PC-9 (cell line): ENCODE measurements at regions of chr21 and their contacts with region 1.

Region 1: GRCh38 chr21:41678944-41679343 is 87.9 kb downstream of the RIPK4 start:
- DNase-seq: peak; percentile 96 to 100
- H3K4me3 ChIP-seq: peak overlapping the region; percentile 73
- H3K27ac ChIP-seq: peak overlapping the region; percentile 99
- H3K4me1 ChIP-seq: peaks cover 56% of the 10 kb centered on the region
- H3K27me3 ChIP-seq: no peaks in the 10 kb centered on the region
- CTCF ChIP-seq: no peak

Region 2: GRCh38 chr21:40829308-40830175 is 849.4 kb before region 1 on chr21:
- CTCF ChIA-PET with region 1: no interaction called
- POLR2A ChIA-PET with region 1: no interaction called
- intact Hi-C with region 1: no loop called
- DNase-seq: no peak
- H3K4me3 ChIP-seq: no peak overlapping the region
- H3K27ac ChIP-seq: no peak overlapping the region
- H3K4me1 ChIP-seq: no peaks in the 10 kb centered on the region
- H3K27me3 ChIP-seq: peaks cover 7% of the 10 kb centered on the region; the same call in 1 of the 2 replicates
- CTCF ChIP-seq: no peak

Region 3: GRCh38 chr21:41387042-41387750 is 291.7 kb before region 1 on chr21:
- CTCF ChIA-PET with region 1: no interaction called
- POLR2A ChIA-PET with region 1: no interaction called
- intact Hi-C with region 1: no loop called
- DNase-seq: no peak
- H3K4me3 ChIP-seq: no peak overlapping the region
- H3K27ac ChIP-seq: no peak overlapping the region
- H3K4me1 ChIP-seq: no peaks in the 10 kb centered on the region
- H3K27me3 ChIP-seq: no peaks in the 10 kb centered on the region
- CTCF ChIP-seq: no peak

Region 4: DNA sequence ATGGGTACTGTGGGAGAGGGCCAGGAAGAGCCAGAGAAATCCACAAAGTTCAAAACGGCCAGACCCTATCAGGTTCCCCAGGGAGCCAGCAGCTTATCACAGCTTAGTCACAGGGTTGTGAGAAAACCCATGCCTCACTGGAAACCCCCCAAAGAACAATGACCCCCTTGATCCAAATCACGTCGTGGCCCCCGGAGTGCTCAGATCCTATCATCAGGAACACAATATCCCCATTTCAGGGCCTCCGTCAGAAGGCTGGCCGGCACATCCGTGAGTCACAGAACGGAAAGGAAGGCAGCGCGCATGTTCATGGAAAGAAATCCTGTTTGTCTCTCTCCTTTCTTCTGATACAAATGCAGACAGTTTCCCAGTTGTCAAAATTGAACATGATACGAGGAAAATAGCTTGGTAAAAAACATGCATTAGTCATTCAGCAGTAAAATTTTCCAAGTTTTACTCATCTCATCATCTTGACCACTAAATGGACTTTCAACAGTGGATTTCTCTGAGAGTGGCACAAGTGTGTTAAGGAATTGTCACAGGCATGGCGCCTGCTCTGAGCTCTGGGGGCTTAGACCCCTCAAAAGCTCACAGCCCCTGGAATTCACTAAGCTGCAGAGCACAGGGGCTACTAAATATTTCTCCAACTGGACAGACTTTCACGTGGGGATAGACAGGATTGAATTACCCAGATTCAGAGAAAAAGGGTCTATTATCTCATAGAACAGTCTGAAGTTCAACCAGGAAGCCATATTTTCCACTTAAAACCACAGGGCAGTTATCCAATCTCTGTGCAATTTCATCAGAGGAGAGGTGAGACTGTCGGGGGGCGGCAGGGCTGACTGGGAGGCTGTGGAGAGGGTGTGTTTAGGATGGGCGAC is 36.9 kb before region 1 on chr21:
- CTCF ChIA-PET with region 1: no interaction called
- POLR2A ChIA-PET with region 1: interaction called, 12 read pairs
- intact Hi-C with region 1: no loop called
- DNase-seq: peak; percentile 58 to 93
- H3K4me3 ChIP-seq: peak overlapping the region; percentile 44; the same call in 1 of the 2 replicates
- H3K27ac ChIP-seq: peak overlapping the region; percentile 100
- H3K4me1 ChIP-seq: peaks cover 75% of the 10 kb centered on the region
- H3K27me3 ChIP-seq: no peaks in the 10 kb centered on the region
- CTCF ChIP-seq: no peak

Region 5: GRCh38 chr21:41706678-41707077 is 27.7 kb after region 1 on chr21:
- CTCF ChIA-PET with region 1: interaction called, 4 read pairs
- POLR2A ChIA-PET with region 1: no interaction called
- intact Hi-C with region 1: loop called (anchors 1 kb)
- DNase-seq: peak in 1 of 2 experiments; percentile 80
- H3K4me3 ChIP-seq: no peak overlapping the region
- H3K27ac ChIP-seq: peak overlapping the region; percentile 93
- H3K4me1 ChIP-seq: peaks cover 79% of the 10 kb centered on the region
- H3K27me3 ChIP-seq: no peaks in the 10 kb centered on the region
- CTCF ChIP-seq: no peak

Region 6: DNA sequence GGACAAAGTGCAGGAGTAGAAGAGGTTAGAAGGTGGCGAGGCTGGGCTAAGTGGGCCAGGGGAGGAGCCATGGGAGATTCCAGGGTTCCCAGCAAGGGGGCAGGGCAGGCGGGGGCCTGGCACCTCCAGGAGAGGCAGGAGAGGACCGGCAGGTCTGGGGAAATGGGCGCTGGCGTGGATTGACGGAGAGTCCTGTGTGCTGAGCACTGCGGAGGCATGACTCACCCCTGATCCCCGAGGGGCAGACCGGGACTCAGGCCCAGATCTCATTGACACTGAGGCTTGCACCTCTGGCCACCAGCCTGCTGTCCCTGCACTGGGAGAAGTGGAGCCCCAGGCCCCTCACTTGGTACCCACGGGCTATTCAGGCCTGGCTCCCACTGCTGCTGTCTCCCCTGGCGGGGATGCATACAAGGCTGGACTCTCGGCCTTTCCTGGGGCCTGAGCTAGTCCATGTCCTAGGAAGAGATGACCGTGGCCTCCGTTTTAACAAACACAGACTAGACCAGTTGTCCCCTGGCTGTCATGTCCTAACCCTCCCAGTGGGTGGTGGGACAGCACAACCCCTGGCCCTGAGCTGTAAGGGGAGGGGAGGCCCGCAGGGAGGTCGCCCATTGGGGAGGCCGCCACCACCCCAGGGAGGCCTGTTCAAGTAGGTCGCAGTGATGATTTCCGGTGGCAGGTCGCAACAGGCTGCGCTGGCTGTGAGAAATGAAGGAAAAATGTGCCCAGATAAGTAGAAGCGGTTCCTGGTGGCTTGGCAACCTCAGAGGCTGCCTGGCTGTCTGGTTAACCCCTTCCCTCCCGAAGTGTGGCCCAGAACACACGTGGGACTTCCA is 48.2 kb after region 1 on chr21:
- CTCF ChIA-PET with region 1: no interaction called
- POLR2A ChIA-PET with region 1: no interaction called
- intact Hi-C with region 1: loop called (anchors 1 kb)
- DNase-seq: peak; percentile 89 to 93
- H3K4me3 ChIP-seq: peak overlapping the region; percentile 27; the same call in 1 of the 2 replicates
- H3K27ac ChIP-seq: peak overlapping the region; percentile 93
- H3K4me1 ChIP-seq: peaks cover 56% of the 10 kb centered on the region
- H3K27me3 ChIP-seq: no peaks in the 10 kb centered on the region
- CTCF ChIP-seq: peak; percentile 37; the same call in 1 of the 2 replicates

Region 7: GRCh38 chr21:41768437-41769061 is 89.6 kb after region 1 on chr21:
- CTCF ChIA-PET with region 1: no interaction called
- POLR2A ChIA-PET with region 1: interaction called, 4 read pairs
- intact Hi-C with region 1: loop called (anchors 1 kb)
- DNase-seq: peak; percentile 28 to 80
- H3K4me3 ChIP-seq: peak overlapping the region; percentile 100
- H3K27ac ChIP-seq: peak overlapping the region; percentile 99
- H3K4me1 ChIP-seq: peaks cover 12% of the 10 kb centered on the region
- H3K27me3 ChIP-seq: no peaks in the 10 kb centered on the region
- CTCF ChIP-seq: no peak; the same call in 1 of the 2 replicates

Region 8: DNA sequence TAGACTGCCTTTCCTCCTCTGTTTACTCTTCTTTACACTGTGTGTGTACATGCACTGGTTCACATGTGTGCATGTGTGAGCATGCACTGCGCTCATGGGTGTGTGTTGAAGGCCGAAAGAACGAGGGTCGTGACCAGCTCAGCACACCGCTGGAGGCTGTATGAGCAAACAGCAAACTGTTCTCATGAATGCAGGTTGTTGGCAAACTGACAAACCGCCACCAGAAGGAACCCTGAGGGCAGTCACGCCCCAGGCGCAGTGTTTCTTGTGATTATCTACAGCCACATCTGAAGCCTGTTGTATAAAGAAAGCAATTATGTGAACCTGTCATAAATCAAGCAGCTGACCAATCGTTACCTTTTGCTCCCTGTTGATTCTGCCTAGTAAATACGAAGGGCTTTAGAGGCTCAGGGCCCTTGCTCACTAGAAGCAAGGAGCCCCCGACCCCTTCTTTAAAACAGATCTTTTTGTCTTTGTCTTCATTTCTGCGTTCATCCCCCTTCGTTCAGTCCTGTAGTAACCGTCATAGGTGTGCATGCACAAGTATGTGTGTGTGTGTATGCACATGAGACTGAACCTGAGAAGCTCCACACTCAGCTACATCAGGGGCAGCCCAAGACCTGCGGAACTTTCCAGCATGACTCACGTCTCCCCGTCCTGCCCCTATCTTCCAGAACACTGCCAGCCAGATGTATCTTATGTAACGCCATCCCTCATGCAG is 104.7 kb after region 1 on chr21:
- CTCF ChIA-PET with region 1: interaction called, 3 read pairs
- POLR2A ChIA-PET with region 1: interaction called, 8 read pairs
- intact Hi-C with region 1: loop called (anchors 1 kb)
- DNase-seq: peak; percentile 95
- H3K4me3 ChIP-seq: peak overlapping the region; percentile 13; the same call in 1 of the 2 replicates
- H3K27ac ChIP-seq: peak overlapping the region; percentile 99
- H3K4me1 ChIP-seq: peaks cover 57% of the 10 kb centered on the region
- H3K27me3 ChIP-seq: no peaks in the 10 kb centered on the region
- CTCF ChIP-seq: no peak